A673 (cell line): ENCODE measurements at regions of chr4 and their contacts with region 1.

Region 1: DNA sequence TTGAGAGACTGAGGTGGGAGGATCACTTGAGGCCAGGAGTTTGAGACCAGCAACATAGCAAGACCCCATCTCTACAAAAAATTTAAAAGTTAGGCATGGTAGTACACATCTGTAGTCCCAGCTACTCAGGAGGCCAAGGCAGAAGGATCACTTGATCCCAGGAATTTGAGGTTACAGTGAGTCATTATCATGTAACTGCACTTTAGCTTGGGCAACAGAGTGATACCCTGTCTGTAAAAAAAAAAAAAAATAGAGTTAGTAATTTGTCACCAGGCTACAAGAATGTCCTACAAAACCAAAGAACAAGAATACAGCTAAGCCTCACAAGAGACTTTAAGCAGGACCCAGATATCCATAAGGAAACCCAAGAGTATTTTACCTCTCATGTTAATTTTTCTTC is 27.0 kb upstream of the RAB28 start:
- DNase-seq: no peak
- H3K4me3 ChIP-seq: no peak overlapping the region
- H3K27ac ChIP-seq: no peak overlapping the region
- H3K4me1 ChIP-seq: peaks cover 14% of the 10 kb centered on the region
- H3K27me3 ChIP-seq: no peaks in the 10 kb centered on the region
- CTCF ChIP-seq: no peak

Region 2: DNA sequence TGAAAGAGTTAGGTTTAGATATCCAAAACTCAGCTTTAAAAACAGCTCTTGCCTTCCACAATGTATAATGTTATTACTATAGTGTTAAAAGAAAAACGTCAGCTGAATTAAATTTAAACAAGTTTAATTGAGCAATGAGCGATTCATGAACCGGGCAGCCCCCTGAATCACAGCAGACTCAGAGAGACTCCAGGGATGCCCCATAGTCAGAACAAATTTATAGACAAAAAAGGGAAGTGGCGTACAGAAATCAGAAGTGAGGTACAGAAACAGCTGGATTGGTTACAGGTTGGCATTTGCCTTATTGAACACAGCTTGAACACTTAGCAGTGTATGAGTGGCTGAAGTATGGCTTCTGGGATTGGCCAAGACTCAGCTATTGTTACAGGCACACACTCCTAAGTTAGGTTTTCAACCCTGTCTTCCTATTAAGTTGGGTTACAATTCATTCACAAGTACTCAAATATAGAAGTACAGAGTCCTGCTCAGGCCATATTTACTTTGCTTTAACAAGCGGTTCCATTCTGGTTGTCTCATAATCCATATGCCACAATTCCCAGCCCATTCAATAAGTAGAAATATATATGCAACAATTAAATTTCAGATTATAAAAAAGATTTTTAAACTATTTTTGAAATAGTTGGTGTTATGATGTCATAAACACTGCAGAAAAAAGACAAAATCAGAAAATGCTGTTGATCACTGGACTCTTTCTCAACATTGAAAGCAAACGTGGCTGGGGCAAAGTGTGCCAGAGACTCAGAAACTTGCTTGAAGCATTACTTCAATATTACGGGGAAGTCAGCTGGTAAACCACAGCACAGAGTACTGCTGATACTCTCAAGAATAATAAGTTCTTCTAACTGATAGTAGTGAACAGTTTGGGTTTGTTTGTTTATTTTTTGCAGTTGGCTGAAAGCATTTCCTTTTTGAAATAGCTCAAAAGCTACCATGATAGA is 486.7 kb before region 1 on chr4:
- CTCF ChIA-PET with region 1: interaction called, 11 read pairs
- POLR2A ChIA-PET with region 1: no interaction called
- intact Hi-C with region 1: no loop called
- DNase-seq: no peak
- H3K4me3 ChIP-seq: no peak overlapping the region
- H3K27ac ChIP-seq: no peak overlapping the region
- H3K4me1 ChIP-seq: no peaks in the 10 kb centered on the region
- H3K27me3 ChIP-seq: no peaks in the 10 kb centered on the region
- CTCF ChIP-seq: no peak